HepG2 (cell line): ENCODE measurements at regions of chr4 and their contacts with region 1.

Region 1: DNA sequence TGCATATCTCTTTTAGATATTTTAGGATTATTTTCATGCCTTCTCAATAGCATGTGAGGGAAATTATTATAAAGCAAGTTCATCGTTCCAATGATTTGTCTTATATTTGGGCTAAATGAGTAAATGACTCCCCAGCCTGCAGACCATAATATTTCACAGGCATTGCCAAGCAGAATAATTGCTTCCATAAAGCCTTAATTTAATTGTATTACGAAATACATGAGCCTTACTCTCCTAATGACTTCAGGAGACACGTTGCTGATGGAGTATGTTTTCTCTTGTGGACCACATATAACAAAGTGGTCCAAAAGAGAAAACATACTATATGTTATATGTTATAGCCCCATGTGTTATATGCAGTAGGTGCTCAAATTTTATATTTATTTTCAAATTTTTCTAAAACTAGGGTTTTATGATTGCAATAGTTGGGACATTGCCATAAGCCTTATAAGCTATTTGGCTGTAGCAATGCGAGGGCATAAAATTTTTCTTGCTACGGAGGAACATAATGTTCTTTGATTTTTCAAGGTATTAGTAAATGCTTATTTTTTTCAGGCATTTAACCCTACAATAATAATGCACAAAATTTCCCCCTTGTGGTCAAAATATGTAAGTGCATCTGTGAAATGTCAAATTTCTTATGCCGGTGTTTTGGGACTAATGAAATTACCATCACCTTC is 26.2 kb upstream of the TMPRSS11D start:
- DNase-seq: peak; percentile 4
- ATAC-seq: no peak
- H3K4me3 ChIP-seq: no peak overlapping the region
- H3K27ac ChIP-seq: no peak overlapping the region
- H3K4me1 ChIP-seq: peaks cover 8% of the 10 kb centered on the region; the same call in 1 of the 2 replicates
- H3K27me3 ChIP-seq: no peaks in the 10 kb centered on the region
- CTCF ChIP-seq: peak; percentile 31; the same call in 1 of the 2 replicates
- EP300 ChIP-seq: no peak
- POLR2A ChIP-seq: no peak
- RAD21 ChIP-seq: no peak

Region 2: DNA sequence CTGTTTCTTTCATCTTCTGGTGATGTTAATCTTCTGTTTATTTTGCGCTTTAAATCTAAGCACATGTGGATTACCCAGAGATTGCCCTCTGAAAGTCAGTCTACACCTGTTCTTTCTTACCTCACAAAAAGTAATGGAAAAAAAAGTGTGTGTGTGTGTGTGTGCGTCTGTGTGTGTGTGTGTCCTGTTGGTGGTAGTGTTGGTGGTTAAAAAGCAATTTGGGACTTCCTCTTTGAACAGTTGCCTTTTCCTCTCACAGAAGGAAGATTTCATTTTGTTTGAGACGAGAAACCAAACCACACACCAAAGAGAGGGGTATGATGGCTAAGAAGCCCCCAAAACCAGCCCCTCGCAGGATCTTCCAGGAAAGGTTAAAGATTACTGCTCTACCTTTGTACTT is 351.6 kb before region 1 on chr4 and contains the start of gene STAP1:
- CTCF ChIA-PET with region 1: no interaction called
- POLR2A ChIA-PET with region 1: no interaction called
- in situ Hi-C with region 1: loop called (anchors 25 kb)
- intact Hi-C with region 1: no loop called
- DNase-seq: no peak
- ATAC-seq: no peak
- H3K4me3 ChIP-seq: no peak within 1 kb of the TSS
- H3K27ac ChIP-seq: no peak within 1 kb of the TSS
- H3K4me1 ChIP-seq: no peaks in the 10 kb centered on the region
- H3K27me3 ChIP-seq: no peaks in the 10 kb centered on the region; a peak in 1 of 5 replicates
- CTCF ChIP-seq: no peak
- EP300 ChIP-seq: no peak
- POLR2A ChIP-seq: no peak
- RAD21 ChIP-seq: no peak
- total RNA-seq, gene STAP1: not detected in 2 replicates

Region 3: DNA sequence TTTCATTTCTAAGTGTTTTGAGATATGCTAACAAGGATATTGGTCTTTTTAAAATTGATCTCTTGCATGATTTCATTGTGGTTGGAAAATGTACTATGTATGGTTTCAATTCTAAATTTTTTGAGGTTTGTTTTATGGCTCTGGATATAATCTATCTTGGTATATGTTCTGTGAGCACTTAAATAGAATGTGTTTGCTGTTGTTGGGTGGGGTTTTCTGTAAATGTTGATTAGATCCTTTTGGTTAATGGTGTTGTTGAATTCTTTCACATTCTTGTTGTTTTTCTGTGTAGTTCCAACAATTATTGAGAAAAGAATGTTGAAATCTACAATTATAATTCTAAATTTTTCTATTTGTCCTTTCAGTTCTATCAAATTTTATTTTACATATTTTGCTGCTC is 113.2 kb before region 1 on chr4:
- CTCF ChIA-PET with region 1: no interaction called
- POLR2A ChIA-PET with region 1: no interaction called
- in situ Hi-C with region 1: no loop called
- intact Hi-C with region 1: no loop called
- DNase-seq: no peak
- ATAC-seq: no peak
- H3K4me3 ChIP-seq: no peak overlapping the region
- H3K27ac ChIP-seq: no peak overlapping the region
- H3K4me1 ChIP-seq: no peaks in the 10 kb centered on the region
- H3K27me3 ChIP-seq: no peaks in the 10 kb centered on the region
- CTCF ChIP-seq: no peak
- EP300 ChIP-seq: no peak
- POLR2A ChIP-seq: no peak
- RAD21 ChIP-seq: no peak

Region 4: GRCh38 chr4:67871867-67872266 is 38.2 kb before region 1 on chr4:
- CTCF ChIA-PET with region 1: interaction called, 9 read pairs
- POLR2A ChIA-PET with region 1: no interaction called
- in situ Hi-C with region 1: no loop called
- intact Hi-C with region 1: loop called (anchors 1 kb)
- DNase-seq: peak; percentile 24
- ATAC-seq: peak; percentile 95
- H3K4me3 ChIP-seq: no peak overlapping the region
- H3K27ac ChIP-seq: no peak overlapping the region
- H3K4me1 ChIP-seq: no peaks in the 10 kb centered on the region
- H3K27me3 ChIP-seq: no peaks in the 10 kb centered on the region
- CTCF ChIP-seq: peak; percentile 52
- EP300 ChIP-seq: no peak
- POLR2A ChIP-seq: no peak
- RAD21 ChIP-seq: no peak